ENCODE measurements at regions of chr4 and their contacts with region 1.

Region 1: GRCh38 chr4:74671080-74671698 is 123.1 kb downstream of the BTC start:
- DNase-seq: no peak
- ATAC-seq: no peak
- H3K4me3 ChIP-seq: no peak overlapping the region
- H3K27ac ChIP-seq: no peak overlapping the region
- H3K4me1 ChIP-seq: no peaks in the 10 kb centered on the region
- H3K27me3 ChIP-seq: no peaks in the 10 kb centered on the region
- CTCF ChIP-seq: peak in 2 of 5 experiments; percentile 11 to 18
- POLR2A ChIP-seq: no peak

Region 2: GRCh38 chr4:74370912-74371311 is 300.3 kb before region 1 on chr4:
- in situ Hi-C with region 1: loop called in 1 of 4 experiments (anchors 25 kb)
- intact Hi-C with region 1: no loop called
- DNase-seq: no peak
- ATAC-seq: no peak
- H3K4me3 ChIP-seq: no peak overlapping the region
- H3K27ac ChIP-seq: no peak overlapping the region
- H3K4me1 ChIP-seq: peaks cover under 1% of the 10 kb centered on the region in 2 donors
- H3K27me3 ChIP-seq: peaks cover 0 to 9% (median 1%) of the 10 kb centered on the region in 3 donors
- CTCF ChIP-seq: no peak
- POLR2A ChIP-seq: no peak

Region 3: GRCh38 chr4:74555231-74555630 is 116.0 kb before region 1 on chr4:
- in situ Hi-C with region 1: no loop called
- intact Hi-C with region 1: no loop called
- DNase-seq: no peak
- ATAC-seq: no peak
- H3K4me3 ChIP-seq: no peak overlapping the region
- H3K27ac ChIP-seq: no peak overlapping the region
- H3K4me1 ChIP-seq: no peaks in the 10 kb centered on the region
- H3K27me3 ChIP-seq: no peaks in the 10 kb centered on the region
- CTCF ChIP-seq: no peak
- POLR2A ChIP-seq: no peak

Measured in gastrocnemius medialis (tissue), 4 donors.